MCF 10A (cell line): ENCODE measurements at regions of chr10 and their contacts with region 1.

Region 1: GRCh38 chr10:72834183-72834825 is 59.2 kb upstream of the OIT3 start:
- DNase-seq: peak; percentile 75
- H3K4me3 Mint-ChIP-seq: no peak overlapping the region
- H3K27ac Mint-ChIP-seq: no peak overlapping the region
- H3K4me1 Mint-ChIP-seq: peaks cover 8% of the 10 kb centered on the region
- H3K27me3 Mint-ChIP-seq: no peaks in the 10 kb centered on the region
- CTCF ChIP-seq: peak; percentile 70

Region 2: GRCh38 chr10:72375585-72375984 is 458.7 kb before region 1 on chr10:
- CTCF ChIA-PET with region 1: interaction called, 4 read pairs
- POLR2A ChIA-PET with region 1: no interaction called
- intact Hi-C with region 1: loop called (anchors 5 kb)
- DNase-seq: no peak
- H3K4me3 Mint-ChIP-seq: no peak overlapping the region
- H3K27ac Mint-ChIP-seq: no peak overlapping the region
- H3K4me1 Mint-ChIP-seq: no peaks in the 10 kb centered on the region
- H3K27me3 Mint-ChIP-seq: no peaks in the 10 kb centered on the region
- CTCF ChIP-seq: no peak